MCF 10A (cell line): ENCODE measurements at regions of chr5 and their contacts with region 1.

Region 1: GRCh38 chr5:135222171-135222681 is 176.8 kb downstream of the MACROH2A1 start:
- DNase-seq: no peak
- H3K4me3 Mint-ChIP-seq: no peak overlapping the region
- H3K27ac Mint-ChIP-seq: no peak overlapping the region
- H3K4me1 Mint-ChIP-seq: no peaks in the 10 kb centered on the region
- H3K27me3 Mint-ChIP-seq: no peaks in the 10 kb centered on the region
- CTCF ChIP-seq: no peak

Region 2: DNA sequence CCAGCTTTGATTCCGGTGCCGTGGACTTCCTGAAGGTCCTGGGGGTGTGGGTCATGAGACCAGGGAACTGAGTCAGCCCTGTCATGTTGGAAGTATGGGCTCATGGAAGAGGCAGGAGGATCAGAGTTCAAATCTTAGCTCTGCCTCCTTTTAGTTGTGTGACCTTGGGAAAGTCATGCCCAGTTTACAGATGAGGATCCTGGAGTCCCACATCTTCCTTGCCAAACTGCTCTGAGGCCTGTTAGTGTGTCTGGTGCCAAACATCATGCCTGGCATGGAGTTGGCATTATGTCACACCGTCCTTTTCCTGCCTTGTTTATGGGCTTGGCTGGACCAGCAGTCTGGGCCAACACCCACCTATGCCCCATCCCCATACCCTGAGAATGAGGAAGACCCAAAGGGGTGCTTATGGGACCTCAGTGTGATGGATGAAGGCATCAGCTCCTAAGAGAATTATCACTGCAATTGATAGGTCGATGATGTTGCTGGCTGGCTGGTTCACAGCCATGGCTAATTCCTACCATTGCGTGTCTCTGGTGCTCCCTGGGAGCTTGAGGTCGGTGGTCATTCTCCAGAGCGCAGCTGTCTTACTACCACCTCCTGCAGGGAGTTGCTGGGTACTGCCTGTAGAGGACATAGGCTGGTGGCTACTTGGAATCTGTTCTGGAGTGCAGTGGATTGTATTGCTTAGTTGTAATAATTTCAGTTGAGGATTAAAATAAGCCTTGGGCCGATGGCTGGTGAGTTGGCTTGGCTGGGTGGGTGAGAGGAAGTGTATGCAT is 47.7 kb before region 1 on chr5:
- CTCF ChIA-PET with region 1: no interaction called
- POLR2A ChIA-PET with region 1: no interaction called
- intact Hi-C with region 1: no loop called
- DNase-seq: no peak
- H3K4me3 Mint-ChIP-seq: no peak overlapping the region
- H3K27ac Mint-ChIP-seq: no peak overlapping the region
- H3K4me1 Mint-ChIP-seq: no peaks in the 10 kb centered on the region
- H3K27me3 Mint-ChIP-seq: peaks cover 22% of the 10 kb centered on the region
- CTCF ChIP-seq: peak; percentile 15

Region 3: GRCh38 chr5:135208903-135209721 is 13.1 kb before region 1 on chr5:
- CTCF ChIA-PET with region 1: interaction called, 14 read pairs
- POLR2A ChIA-PET with region 1: no interaction called
- intact Hi-C with region 1: no loop called
- DNase-seq: peak; percentile 90
- H3K4me3 Mint-ChIP-seq: no peak overlapping the region
- H3K27ac Mint-ChIP-seq: peak overlapping the region; percentile 8
- H3K4me1 Mint-ChIP-seq: peaks cover 14% of the 10 kb centered on the region
- H3K27me3 Mint-ChIP-seq: no peaks in the 10 kb centered on the region
- CTCF ChIP-seq: no peak

Region 4: GRCh38 chr5:135266975-135267374 is 44.7 kb after region 1 on chr5:
- CTCF ChIA-PET with region 1: no interaction called
- POLR2A ChIA-PET with region 1: no interaction called
- intact Hi-C with region 1: no loop called
- DNase-seq: no peak
- H3K4me3 Mint-ChIP-seq: no peak overlapping the region
- H3K27ac Mint-ChIP-seq: no peak overlapping the region
- H3K4me1 Mint-ChIP-seq: no peaks in the 10 kb centered on the region
- H3K27me3 Mint-ChIP-seq: no peaks in the 10 kb centered on the region
- CTCF ChIP-seq: no peak